A549 (cell line): ENCODE measurements at regions of chr16 and their contacts with region 1.

Region 1: DNA sequence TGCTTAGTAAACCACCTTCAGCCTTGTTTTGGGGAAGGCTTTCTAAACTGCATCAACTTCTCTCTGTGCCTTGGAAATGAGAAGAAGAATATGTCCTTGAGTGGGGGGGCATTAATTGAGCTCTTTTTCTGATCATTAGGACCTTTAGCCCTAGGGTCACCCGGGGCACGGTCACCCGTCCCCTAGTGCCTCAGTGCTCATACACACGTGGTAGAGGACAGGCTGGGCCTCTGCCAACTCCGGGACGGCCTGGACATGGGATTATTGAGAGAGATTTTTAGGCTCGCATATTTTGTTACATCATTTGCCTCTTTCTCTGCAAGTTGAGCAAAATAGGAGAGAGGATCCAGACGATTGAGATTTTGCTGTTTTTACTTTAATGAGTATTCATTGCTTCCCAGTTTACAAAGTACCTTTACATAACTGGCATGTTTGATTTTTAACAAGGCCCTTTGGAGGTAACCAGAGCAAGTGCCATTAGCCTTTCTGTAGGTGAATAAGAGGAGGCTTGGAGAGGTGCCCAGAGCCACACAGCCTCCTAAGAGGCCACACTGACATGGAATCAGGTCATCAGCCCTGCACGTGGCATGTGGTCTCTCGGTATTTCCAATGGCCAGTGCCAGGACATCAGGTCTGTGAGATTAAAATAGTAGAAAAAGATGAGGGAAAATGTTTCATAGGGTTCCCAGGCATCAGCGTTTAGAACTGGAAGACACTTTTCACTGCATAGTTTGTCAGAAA is 11.1 kb downstream of the PMM2 start:
- DNase-seq: no peak
- ATAC-seq: no peak
- H3K4me3 ChIP-seq: no peak overlapping the region
- H3K27ac ChIP-seq: no peak overlapping the region
- H3K4me1 ChIP-seq: no peaks in the 10 kb centered on the region
- CTCF ChIP-seq: no peak
- EP300 ChIP-seq: no peak
- POLR2A ChIP-seq: no peak
- RAD21 ChIP-seq: no peak

Region 2: DNA sequence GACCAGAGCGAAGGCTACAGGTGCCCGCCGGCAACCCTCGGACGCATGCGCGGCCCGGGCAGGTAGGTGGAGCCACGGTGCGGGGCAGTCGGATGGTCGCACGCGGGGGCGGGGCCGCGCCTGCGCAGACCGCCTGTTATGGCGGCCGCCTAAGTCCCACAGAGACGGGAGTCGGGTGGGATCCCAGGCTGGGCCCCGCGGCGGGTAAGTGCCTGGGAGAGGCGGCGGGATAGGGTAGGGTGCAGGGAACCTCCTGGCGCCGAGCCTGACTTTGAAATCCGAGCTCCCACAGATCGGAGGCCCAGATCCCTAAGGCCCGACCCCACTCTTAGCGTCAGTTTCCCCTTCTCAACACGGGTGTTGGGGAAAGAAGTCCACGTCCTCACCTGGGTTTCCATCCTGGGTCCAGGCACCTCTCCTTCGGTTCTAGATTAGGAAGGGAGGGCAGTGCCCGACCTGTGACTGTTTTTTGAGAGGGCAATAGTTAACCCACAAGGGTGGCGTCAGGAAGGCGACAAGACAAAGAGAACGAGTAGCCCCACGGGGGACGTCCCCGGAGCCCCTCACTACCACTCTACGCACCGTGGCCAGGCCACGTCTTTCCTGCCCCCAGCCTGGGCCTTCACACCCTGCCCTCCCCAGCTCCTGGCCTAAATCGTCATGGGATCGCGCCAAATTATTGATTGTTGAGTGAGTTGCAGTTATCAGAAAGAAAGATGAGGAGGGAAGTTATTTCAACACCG is 187.0 kb before region 1 on chr16 and contains the start of gene METTL22:
- CTCF ChIA-PET with region 1: no interaction called
- POLR2A ChIA-PET with region 1: no interaction called
- DNase-seq: peak; percentile 88 to 89
- ATAC-seq: peak; percentile 87 to 97
- H3K4me3 ChIP-seq: peak within 1 kb of the TSS; percentile 100
- H3K27ac ChIP-seq: peak within 1 kb of the TSS; percentile 94 to 98
- H3K4me1 ChIP-seq: peaks cover 15% of the 10 kb centered on the region
- CTCF ChIP-seq: no peak
- EP300 ChIP-seq: no peak
- POLR2A ChIP-seq: peak; percentile 76
- RAD21 ChIP-seq: no peak
- polyA plus RNA-seq, gene METTL22: 36.7 and 40.9 TPM in 2 replicates

Region 3: DNA sequence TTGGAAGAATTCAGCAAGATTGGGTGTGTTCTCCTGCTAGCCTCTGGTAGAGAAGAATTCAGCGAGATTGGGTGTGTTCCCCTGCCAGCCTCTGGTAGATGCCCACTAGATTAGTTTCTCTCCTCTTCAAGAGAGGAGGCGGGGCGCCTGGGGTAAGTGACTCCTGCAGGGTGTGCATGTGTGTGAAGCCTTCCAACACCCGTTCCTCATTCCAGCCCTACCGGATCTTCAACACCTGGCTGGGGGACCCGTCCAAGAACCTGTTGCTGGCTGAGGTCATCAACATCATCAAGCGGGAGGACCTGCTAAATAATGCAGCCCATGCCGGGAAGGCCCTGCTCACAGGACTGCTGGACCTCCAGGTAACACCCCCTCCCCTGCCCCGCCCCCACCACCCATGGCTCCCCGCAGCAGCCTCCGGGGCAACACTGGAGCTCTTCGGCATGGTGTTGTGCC is 32.6 kb before region 1 on chr16:
- CTCF ChIA-PET with region 1: no interaction called
- POLR2A ChIA-PET with region 1: no interaction called
- DNase-seq: no peak
- ATAC-seq: peak; percentile 35 to 38; a peak in 3 of 6 replicates
- H3K4me3 ChIP-seq: no peak overlapping the region
- H3K27ac ChIP-seq: no peak overlapping the region
- H3K4me1 ChIP-seq: no peaks in the 10 kb centered on the region
- CTCF ChIP-seq: no peak
- EP300 ChIP-seq: no peak
- POLR2A ChIP-seq: no peak
- RAD21 ChIP-seq: no peak

Region 4: GRCh38 chr16:8822403-8822802 is 13.6 kb after region 1 on chr16:
- CTCF ChIA-PET with region 1: interaction called, 14 read pairs
- POLR2A ChIA-PET with region 1: interaction called, 4 read pairs
- DNase-seq: no peak
- ATAC-seq: no peak
- H3K4me3 ChIP-seq: no peak overlapping the region
- H3K27ac ChIP-seq: no peak overlapping the region
- H3K4me1 ChIP-seq: no peaks in the 10 kb centered on the region
- CTCF ChIP-seq: no peak
- EP300 ChIP-seq: no peak
- POLR2A ChIP-seq: no peak
- RAD21 ChIP-seq: no peak

Region 5: DNA sequence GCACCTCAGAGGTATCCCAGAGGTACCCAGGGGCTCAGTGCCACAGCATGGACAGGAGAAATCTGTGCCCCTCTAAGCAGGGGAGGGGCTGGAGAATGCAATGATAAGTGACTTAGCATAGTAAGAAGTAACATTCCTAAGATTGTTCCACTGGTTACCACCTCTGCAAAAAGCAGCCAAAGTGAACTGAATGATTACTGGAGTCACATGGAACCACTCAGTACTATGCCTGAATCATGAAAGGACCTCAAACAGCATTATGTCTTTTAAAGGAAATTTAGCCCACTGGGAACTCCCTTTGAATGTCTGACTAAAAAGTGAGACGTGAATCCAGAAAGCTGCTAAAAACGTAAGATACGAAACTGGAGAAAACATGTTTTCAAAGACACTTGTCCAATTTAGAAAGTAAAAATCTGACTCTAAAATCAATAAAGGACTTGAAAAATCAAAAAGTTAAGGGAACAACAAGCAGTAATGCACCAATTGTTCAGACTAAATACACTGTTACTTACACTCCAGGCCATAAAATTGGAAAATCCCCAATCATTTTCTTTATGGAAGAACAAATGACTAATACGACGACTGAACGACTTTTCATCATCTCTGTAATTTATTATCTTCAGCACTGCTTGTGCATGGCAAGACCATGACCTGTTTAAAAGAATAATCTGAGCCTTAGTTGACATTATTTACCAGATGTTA is 112.0 kb after region 1 on chr16:
- CTCF ChIA-PET with region 1: no interaction called
- POLR2A ChIA-PET with region 1: no interaction called
- DNase-seq: no peak
- ATAC-seq: no peak
- H3K4me3 ChIP-seq: no peak overlapping the region
- H3K27ac ChIP-seq: no peak overlapping the region
- H3K4me1 ChIP-seq: no peaks in the 10 kb centered on the region
- CTCF ChIP-seq: no peak
- EP300 ChIP-seq: no peak
- POLR2A ChIP-seq: no peak
- RAD21 ChIP-seq: no peak